ENCODE measurements at regions of chr4 and their contacts with region 1.

Region 1: GRCh38 chr4:88613417-88613875 is 21.2 kb downstream of the HERC3 start:
- DNase-seq: no peak
- H3K4me3 ChIP-seq: no peak overlapping the region
- H3K27ac ChIP-seq: peak overlapping the region; percentile 97
- H3K4me1 ChIP-seq: peaks cover 70% of the 10 kb centered on the region
- H3K27me3 ChIP-seq: no peaks in the 10 kb centered on the region
- CTCF ChIP-seq: no peak

Region 2: DNA sequence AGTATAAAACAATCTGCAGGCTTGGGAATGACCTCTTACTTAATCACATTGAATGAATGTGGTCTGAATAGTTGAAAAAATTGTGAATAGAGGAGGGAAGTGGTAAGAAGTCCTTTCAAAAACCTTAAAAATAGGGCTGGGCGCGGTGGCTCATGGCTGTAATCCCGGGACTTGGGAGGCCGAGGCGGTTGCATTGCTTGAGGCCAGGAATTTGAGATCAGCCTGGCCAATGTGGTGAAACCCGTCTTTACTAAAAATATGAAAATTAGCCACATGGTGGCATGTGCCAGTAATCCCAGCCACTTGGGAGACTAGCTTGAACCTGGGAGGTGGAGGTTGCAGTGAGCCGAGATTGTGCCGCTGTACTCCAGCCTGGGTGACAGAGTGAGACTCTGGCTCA is 15.3 kb after region 1 on chr4:
- CTCF ChIA-PET with region 1: no interaction called
- dilution Hi-C with region 1: no loop called
- in situ Hi-C with region 1: no loop called
- intact Hi-C with region 1: loop called (anchors 1 kb)
- DNase-seq: no peak
- H3K4me3 ChIP-seq: no peak overlapping the region
- H3K27ac ChIP-seq: peak overlapping the region; percentile 7
- H3K4me1 ChIP-seq: peaks cover 15% of the 10 kb centered on the region
- H3K27me3 ChIP-seq: no peaks in the 10 kb centered on the region
- CTCF ChIP-seq: no peak

Measured in mammary epithelial cell (primary cell).